Gastrocnemius medialis (tissue), 4 donors: ENCODE measurements at regions of chr17 and their contacts with region 1.

Region 1: DNA sequence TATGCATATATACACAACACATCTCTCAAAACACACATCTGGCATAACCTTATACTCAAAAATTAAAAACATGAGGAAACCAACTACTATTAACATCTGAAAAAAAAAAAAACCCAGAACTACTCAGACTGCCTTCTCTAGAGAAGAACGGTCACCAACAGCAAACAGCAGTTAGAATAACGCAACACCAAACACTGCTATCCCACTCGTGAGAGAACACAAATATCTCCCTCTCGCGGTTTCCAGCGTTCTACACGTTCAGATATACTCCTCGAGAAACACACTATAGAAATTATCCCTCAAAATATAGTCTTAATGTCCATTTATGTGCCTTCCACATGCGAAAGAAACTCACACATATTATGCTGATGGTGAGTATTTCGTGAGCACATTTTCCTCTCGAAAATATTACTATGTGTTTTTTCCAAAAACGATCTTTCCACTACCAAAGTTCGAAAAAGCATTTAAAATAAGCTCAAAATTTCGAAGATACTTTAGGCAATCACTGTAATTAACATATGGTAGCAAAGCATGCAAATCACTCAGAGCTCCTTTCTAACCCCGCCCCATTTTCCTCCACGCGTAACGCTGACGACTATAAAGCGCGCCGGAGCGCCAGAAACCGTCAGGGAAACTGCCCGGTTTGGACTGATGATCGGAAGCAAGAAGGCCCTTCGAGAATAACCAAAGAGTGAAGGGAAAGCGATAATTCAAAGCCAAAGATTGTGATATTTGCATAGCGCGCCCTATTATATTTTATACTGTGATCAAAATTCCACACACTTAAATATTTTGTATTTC is 60.1 kb downstream of the TEX14 start:
- DNase-seq: peak; percentile 78 to 91
- ATAC-seq: peak; percentile 93 to 95
- H3K4me3 ChIP-seq: peak overlapping the region; percentile 32 to 52 (median 50)
- H3K27ac ChIP-seq: peak overlapping the region; percentile 71 to 79 (median 73)
- H3K4me1 ChIP-seq: no peaks in the 10 kb centered on the region
- H3K27me3 ChIP-seq: no peaks in the 10 kb centered on the region
- CTCF ChIP-seq: no peak
- POLR2A ChIP-seq: peak; percentile 91 to 96

Region 2: GRCh38 chr17:58556833-58557250 is 74.9 kb before region 1 on chr17:
- in situ Hi-C with region 1: no loop called
- intact Hi-C with region 1: no loop called
- DNase-seq: no peak
- ATAC-seq: no peak
- H3K4me3 ChIP-seq: no peak overlapping the region
- H3K27ac ChIP-seq: no peak overlapping the region
- H3K4me1 ChIP-seq: no peaks in the 10 kb centered on the region
- H3K27me3 ChIP-seq: no peaks in the 10 kb centered on the region
- CTCF ChIP-seq: no peak
- POLR2A ChIP-seq: no peak

Region 3: GRCh38 chr17:58587702-58588254 is 43.9 kb before region 1 on chr17:
- in situ Hi-C with region 1: no loop called
- intact Hi-C with region 1: no loop called
- DNase-seq: peak in 1 of 2 donors; percentile 20
- ATAC-seq: peak; percentile 45 to 84
- H3K4me3 ChIP-seq: no peak overlapping the region
- H3K27ac ChIP-seq: no peak overlapping the region
- H3K4me1 ChIP-seq: no peaks in the 10 kb centered on the region
- H3K27me3 ChIP-seq: no peaks in the 10 kb centered on the region
- CTCF ChIP-seq: peak; percentile 61 to 87 (median 73)
- POLR2A ChIP-seq: no peak

Region 4: GRCh38 chr17:58658804-58659713 is 27.3 kb after region 1 on chr17:
- in situ Hi-C with region 1: no loop called
- intact Hi-C with region 1: loop called (anchors 1 kb)
- DNase-seq: peak; percentile 41 to 79
- ATAC-seq: peak; percentile 96 to 99
- H3K4me3 ChIP-seq: peak overlapping the region; percentile 55 to 66 (median 61)
- H3K27ac ChIP-seq: peak overlapping the region; percentile 65 to 80 (median 79)
- H3K4me1 ChIP-seq: no peaks in the 10 kb centered on the region
- H3K27me3 ChIP-seq: no peaks in the 10 kb centered on the region
- CTCF ChIP-seq: peak in 1 of 5 experiments; percentile 41
- POLR2A ChIP-seq: peak; percentile 94 to 98

Region 5: GRCh38 chr17:58692239-58693055 is 60.7 kb after region 1 on chr17 and contains the start of gene RAD51C:
- in situ Hi-C with region 1: no loop called
- intact Hi-C with region 1: loop called (anchors 1 kb)
- DNase-seq: peak; percentile 53 to 67
- ATAC-seq: peak; percentile 91 to 95
- H3K4me3 ChIP-seq: peak within 1 kb of the TSS; percentile 65 to 80 (median 79)
- H3K27ac ChIP-seq: peak within 1 kb of the TSS; percentile 74 to 79 (median 76)
- H3K4me1 ChIP-seq: peaks cover 10 to 12% of the 10 kb centered on the region in 2 donors
- H3K27me3 ChIP-seq: no peaks in the 10 kb centered on the region
- CTCF ChIP-seq: no peak
- POLR2A ChIP-seq: peak; percentile 38 to 39
- total RNA-seq, gene RAD51C: 6.4 to 18.7 (median 12.5) TPM

Region 6: DNA sequence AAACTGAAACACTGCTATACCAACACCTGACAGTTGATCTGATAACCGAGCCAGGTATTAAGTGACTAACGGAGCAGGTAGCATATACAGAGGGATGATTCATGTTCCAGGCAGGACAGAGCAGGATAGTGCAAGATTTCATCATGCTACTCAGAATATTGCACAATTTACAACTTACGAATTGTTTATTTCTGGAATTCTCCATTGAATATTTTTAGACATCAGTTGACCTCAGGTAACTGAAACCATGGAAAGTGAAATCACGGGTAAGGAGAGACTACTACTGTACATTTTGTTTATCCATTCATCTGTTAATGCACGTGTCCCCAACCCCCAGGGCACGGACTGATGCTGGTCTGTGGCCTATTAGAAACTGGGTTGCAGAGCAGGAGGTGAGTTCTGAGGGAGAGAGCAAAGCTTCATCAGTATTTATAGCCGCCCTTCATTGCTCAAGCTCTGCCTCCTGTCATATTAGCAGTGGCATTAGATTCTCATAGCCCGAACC is 109.5 kb after region 1 on chr17:
- in situ Hi-C with region 1: loop called in 1 of 4 experiments (anchors 25 kb)
- intact Hi-C with region 1: no loop called
- DNase-seq: peak in 1 of 2 donors; percentile 18
- ATAC-seq: peak; percentile 50 to 91
- H3K4me3 ChIP-seq: no peak overlapping the region
- H3K27ac ChIP-seq: no peak overlapping the region
- H3K4me1 ChIP-seq: no peaks in the 10 kb centered on the region
- H3K27me3 ChIP-seq: no peaks in the 10 kb centered on the region
- CTCF ChIP-seq: no peak
- POLR2A ChIP-seq: no peak

Region 7: DNA sequence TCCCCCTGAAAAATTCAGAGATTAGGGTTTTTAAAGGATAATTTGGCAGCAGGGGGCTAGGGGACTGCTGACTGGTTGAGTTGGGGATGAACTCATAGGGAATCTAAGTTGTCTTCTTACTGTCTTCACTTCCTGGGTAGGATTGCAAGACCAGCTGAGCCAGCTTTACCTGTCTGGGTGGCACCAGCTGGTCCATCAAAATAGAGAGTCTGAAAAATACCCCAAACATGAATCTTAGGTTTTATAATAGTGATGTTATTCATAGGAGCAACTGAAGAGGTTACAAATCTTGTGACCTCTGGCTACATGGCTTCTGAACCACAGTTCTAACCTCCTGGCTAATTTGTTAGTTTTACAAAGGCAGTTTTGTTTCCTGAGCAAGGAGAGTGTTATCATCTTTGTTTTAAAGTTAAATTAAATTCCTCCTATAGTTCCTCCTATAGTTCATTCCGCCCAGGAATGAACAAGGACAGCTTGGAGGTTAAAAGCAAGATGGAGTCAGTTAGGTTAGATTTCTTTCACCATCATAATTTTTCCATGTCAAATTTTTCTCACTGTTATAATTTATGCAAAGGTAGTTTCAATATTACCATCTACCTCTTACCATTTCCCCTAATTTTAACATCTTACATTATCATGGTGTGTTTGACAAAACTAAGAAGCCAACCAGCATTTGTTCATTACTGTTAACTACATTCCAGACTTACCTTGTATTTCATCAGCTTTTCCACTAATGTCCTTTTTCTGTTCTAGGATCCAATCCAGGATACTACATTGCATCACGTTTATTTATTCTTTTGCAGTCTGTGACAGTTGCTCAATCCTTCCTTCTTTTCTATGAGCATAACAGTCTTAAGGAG is 282.1 kb after region 1 on chr17:
- in situ Hi-C with region 1: no loop called
- intact Hi-C with region 1: no loop called
- DNase-seq: no peak
- ATAC-seq: no peak
- H3K4me3 ChIP-seq: no peak overlapping the region
- H3K27ac ChIP-seq: no peak overlapping the region
- H3K4me1 ChIP-seq: no peaks in the 10 kb centered on the region
- H3K27me3 ChIP-seq: no peaks in the 10 kb centered on the region
- CTCF ChIP-seq: no peak
- POLR2A ChIP-seq: no peak